Aorta (tissue), 5 donors: ENCODE measurements at regions of chrX and their contacts with region 1.

Region 1: GRCh38 chrX:7164174-7164573 is 16.2 kb upstream of the PUDP start:
- DNase-seq: no peak
- ATAC-seq: no peak
- H3K4me3 ChIP-seq: no peak overlapping the region
- H3K27ac ChIP-seq: no peak overlapping the region
- H3K4me1 ChIP-seq: peaks cover 0 to 3% of the 10 kb centered on the region in 2 donors
- H3K27me3 ChIP-seq: no peaks in the 10 kb centered on the region

Region 2: DNA sequence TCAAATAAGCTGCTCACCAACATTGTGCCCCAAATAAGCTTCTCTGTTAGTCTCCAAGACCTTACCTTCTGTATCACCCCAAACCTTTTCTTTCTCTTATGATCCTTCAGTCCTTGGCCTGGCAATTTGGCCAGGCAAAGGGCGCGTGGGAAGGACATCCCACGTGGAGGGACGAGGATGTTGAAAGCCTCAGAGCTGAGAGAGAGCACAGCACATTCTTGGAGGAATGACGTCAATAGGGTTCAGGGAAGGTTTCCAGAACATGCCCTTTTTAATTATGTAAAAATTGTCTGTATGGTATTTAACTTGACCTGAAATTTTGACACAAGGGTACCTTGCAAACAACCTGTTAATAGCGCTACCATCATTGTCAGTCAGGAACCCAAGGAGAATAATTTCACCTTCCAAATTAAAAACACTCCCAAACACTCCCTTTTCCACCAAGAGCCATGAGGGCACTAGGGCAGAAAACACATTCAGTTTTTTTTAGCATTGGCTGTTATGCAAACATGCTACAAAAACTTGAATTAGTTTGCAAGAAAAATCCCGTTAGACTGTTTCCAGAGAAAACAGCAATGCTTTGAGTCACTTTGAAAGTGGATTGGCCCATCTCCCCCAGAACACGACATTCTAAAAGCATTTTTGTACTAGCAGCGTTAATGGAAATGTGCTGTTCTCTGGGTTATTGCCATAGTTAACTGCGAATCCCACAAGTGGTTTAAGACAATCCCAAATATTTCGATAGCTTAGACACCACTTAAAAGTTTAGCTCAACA is 167.0 kb after region 1 on chrX:
- intact Hi-C with region 1: loop called in 1 of 2 experiments (anchors 10 kb)
- DNase-seq: peak; percentile 64 to 79
- ATAC-seq: peak; percentile 83
- H3K4me3 ChIP-seq: no peak overlapping the region
- H3K27ac ChIP-seq: peak overlapping the region; percentile 51 to 57
- H3K4me1 ChIP-seq: peaks cover 0 to 2% of the 10 kb centered on the region in 2 donors
- H3K27me3 ChIP-seq: no peaks in the 10 kb centered on the region

Region 3: DNA sequence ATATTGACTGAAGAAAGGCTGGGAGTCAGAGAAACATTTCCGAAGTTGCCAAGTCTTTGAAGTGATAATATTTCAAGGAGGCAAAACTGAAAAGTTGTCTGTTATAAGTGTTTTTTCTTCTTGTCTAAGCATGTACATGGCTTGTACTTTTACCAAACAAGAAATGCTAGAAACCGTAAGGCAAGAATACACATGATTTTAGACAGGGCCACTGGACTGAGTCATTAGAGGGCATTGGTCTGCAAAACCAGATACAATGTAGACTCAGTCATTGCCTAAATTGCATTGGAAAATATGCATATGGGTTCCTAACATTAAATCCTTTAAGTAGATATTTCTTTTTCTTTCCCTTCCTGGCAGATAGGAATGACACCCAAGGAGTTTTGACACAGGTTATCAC is 268.7 kb after region 1 on chrX:
- intact Hi-C with region 1: no loop called
- DNase-seq: no peak
- ATAC-seq: no peak
- H3K4me3 ChIP-seq: no peak overlapping the region
- H3K27ac ChIP-seq: no peak overlapping the region
- H3K4me1 ChIP-seq: peaks cover 0 to 2% of the 10 kb centered on the region in 2 donors
- H3K27me3 ChIP-seq: no peaks in the 10 kb centered on the region